H1 (cell line): ENCODE measurements at regions of chr18 and their contacts with region 1.

Region 1: DNA sequence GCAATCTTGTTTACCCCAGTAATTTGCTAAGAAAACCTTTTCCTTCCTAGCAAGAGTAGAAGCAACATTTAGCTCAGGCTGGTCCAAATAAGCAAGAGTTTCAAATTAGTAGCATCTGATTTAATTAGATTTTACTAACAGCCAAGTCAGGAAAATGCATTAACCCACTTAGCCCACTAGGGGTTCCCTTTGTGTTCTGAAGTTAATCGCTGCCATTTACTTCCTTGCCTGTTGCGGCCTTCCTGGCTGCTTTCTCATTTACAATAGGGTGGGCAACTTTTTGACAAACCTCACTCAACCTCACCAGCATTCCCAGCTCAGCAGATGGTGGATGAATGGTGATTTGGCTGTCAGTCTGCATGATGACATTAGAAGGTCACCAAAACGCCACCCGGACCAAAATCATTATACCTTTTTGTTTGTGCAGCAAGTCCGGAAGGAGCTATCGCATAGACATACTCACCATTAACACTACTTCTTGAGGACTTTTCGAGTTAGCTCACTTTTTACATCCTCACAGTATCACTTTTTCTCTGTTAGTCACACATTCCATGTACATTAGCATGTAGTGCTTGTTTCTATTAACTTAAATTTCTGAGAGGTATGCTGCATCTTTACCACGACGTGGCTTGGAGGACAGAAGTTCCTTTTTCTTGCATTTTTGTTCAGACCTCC is 101.5 kb upstream of the SETBP1 start:
- DNase-seq: no peak
- H3K4me3 ChIP-seq: no peak overlapping the region
- H3K27ac ChIP-seq: no peak overlapping the region
- H3K4me1 ChIP-seq: no peaks in the 10 kb centered on the region
- H3K27me3 ChIP-seq: no peaks in the 10 kb centered on the region
- CTCF ChIP-seq: peak in 2 of 3 experiments; percentile 53 to 74; a peak in 3 of 4 replicates
- EP300 ChIP-seq: no peak
- POLR2A ChIP-seq: no peak
- RAD21 ChIP-seq: peak; percentile 66 to 71

Region 2: GRCh38 chr18:44533071-44533470 is 46.1 kb before region 1 on chr18:
- CTCF ChIA-PET with region 1: interaction called, 15 read pairs
- POLR2A ChIA-PET with region 1: no interaction called
- DNase-seq: no peak
- H3K4me3 ChIP-seq: no peak overlapping the region
- H3K27ac ChIP-seq: no peak overlapping the region
- H3K4me1 ChIP-seq: no peaks in the 10 kb centered on the region
- H3K27me3 ChIP-seq: no peaks in the 10 kb centered on the region
- CTCF ChIP-seq: no peak
- EP300 ChIP-seq: no peak
- POLR2A ChIP-seq: no peak
- RAD21 ChIP-seq: no peak

Region 3: GRCh38 chr18:44568986-44569385 is 10.2 kb before region 1 on chr18:
- CTCF ChIA-PET with region 1: interaction called, 24 read pairs
- POLR2A ChIA-PET with region 1: no interaction called
- DNase-seq: no peak
- H3K4me3 ChIP-seq: no peak overlapping the region
- H3K27ac ChIP-seq: no peak overlapping the region
- H3K4me1 ChIP-seq: peaks cover 0 to 8% (median 2%) of the 10 kb centered on the region in 4 experiments; a peak in 2 of 7 replicates
- H3K27me3 ChIP-seq: no peaks in the 10 kb centered on the region
- CTCF ChIP-seq: no peak
- EP300 ChIP-seq: no peak
- POLR2A ChIP-seq: no peak
- RAD21 ChIP-seq: no peak

Region 4: DNA sequence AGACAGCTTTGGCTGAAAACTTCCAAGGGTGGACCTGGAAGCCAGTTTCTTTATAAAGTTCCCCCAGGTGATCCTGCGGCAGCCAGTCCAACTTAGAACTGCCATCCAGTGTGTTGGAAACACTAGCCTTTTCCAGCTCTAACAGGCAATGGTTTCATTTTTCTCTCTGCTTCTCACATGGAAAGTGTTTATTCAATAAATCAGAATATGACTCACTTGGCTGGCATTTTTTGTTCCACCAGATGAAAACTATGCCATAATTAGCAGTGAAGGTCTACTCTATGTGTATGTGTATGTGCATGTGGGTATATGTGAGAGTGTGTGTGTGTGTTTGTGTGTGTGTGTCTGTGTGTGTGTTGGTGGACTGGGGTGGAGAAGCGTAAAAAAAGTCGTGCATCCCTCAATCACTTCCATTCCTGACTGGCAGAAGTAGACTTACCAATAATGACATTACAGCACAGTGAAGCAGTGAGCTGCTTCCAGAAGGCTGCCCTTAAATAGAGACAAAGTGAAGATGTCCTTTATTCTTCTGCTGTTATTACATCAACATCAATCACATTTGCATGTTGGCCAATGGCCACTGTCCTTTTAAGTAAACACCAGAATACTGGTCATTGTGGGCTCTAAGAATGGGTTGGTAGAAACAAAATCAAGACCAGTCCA is 10.7 kb after region 1 on chr18:
- CTCF ChIA-PET with region 1: interaction called, 18 read pairs
- POLR2A ChIA-PET with region 1: no interaction called
- DNase-seq: no peak
- H3K4me3 ChIP-seq: no peak overlapping the region
- H3K27ac ChIP-seq: no peak overlapping the region
- H3K4me1 ChIP-seq: no peaks in the 10 kb centered on the region
- H3K27me3 ChIP-seq: no peaks in the 10 kb centered on the region
- CTCF ChIP-seq: no peak
- EP300 ChIP-seq: no peak
- POLR2A ChIP-seq: no peak
- RAD21 ChIP-seq: no peak

Region 5: DNA sequence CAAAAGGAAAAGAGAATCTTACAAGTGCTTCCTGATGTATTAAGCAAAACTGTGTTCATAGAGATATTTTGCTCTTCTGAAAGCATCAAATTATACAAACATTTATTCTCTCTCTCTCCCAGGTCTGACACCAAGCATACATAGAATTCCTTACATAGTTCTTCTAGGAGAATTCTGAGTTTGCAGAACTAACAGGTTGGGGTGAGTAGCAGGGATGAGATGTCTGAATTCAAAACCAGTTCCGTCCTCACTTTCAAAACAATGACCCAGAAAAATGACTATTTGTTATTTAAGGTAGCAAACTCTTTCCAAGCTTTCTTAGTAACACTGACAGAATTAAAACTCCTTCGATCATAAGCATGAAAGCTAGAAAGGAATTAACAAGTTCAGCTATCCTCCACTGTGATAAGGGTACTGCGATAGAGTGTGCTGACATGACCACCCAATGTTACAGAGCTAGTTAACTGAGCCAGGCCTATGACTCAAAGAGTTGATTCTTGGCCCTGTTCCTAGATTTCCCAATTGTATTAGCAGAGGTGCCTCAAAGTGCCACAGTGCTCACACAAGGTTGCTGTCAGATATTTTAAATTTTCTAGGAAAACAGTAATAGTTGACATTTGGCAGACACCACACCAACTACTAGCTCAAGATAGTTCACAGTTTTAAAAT is 15.8 kb after region 1 on chr18:
- CTCF ChIA-PET with region 1: interaction called, 15 read pairs
- POLR2A ChIA-PET with region 1: no interaction called
- DNase-seq: no peak
- H3K4me3 ChIP-seq: no peak overlapping the region
- H3K27ac ChIP-seq: no peak overlapping the region
- H3K4me1 ChIP-seq: 0 out of 7 replicates have a peak, but pooled peaks cover 0 to 3% (median 0%) of the 10 kb centered on the region in 4 experiments
- H3K27me3 ChIP-seq: no peaks in the 10 kb centered on the region
- CTCF ChIP-seq: no peak
- EP300 ChIP-seq: no peak
- POLR2A ChIP-seq: no peak
- RAD21 ChIP-seq: no peak